Sigmoid colon (tissue), 7 donors: ENCODE measurements at regions of chr7 and their contacts with region 1.

Region 1: GRCh38 chr7:140175221-140176121 is 1.3 kb downstream of the KDM7A start:
- DNase-seq: peak; percentile 97
- H3K4me3 ChIP-seq: peak overlapping the region; percentile 75 to 97 (median 81)
- H3K27ac ChIP-seq: peak overlapping the region; percentile 95 to 100 (median 100)
- H3K4me1 ChIP-seq: peaks cover 0 to 29% (median 23%) of the 10 kb centered on the region in 4 donors
- H3K27me3 ChIP-seq: no peaks in the 10 kb centered on the region
- CTCF ChIP-seq: peak; percentile 76 to 95 (median 84)
- EP300 ChIP-seq: peak in 1 of 4 donors; percentile 14
- POLR2A ChIP-seq: peak; percentile 63 to 76

Region 2: GRCh38 chr7:139359366-139360209 is 815.9 kb before region 1 on chr7 and contains the start of gene LUC7L2:
- intact Hi-C with region 1: loop called (anchors 5 kb)
- DNase-seq: peak; percentile 100
- H3K4me3 ChIP-seq: peak within 1 kb of the TSS; percentile 76 to 98 (median 94)
- H3K27ac ChIP-seq: peak within 1 kb of the TSS; percentile 98 to 100 (median 100)
- H3K4me1 ChIP-seq: peaks cover 0 to 41% (median 32%) of the 10 kb centered on the region in 4 donors
- H3K27me3 ChIP-seq: no peaks in the 10 kb centered on the region
- CTCF ChIP-seq: no peak
- EP300 ChIP-seq: peak in 2 of 4 donors; percentile 20 to 59
- POLR2A ChIP-seq: peak; percentile 82 to 93
- total RNA-seq, gene LUC7L2: 67.1 to 79.1 (median 74.5) TPM

Region 3: GRCh38 chr7:140062528-140063299 is 112.8 kb before region 1 on chr7 and contains the start of gene PARP12:
- intact Hi-C with region 1: loop called (anchors 5 kb)
- DNase-seq: peak; percentile 90
- H3K4me3 ChIP-seq: peak within 1 kb of the TSS; percentile 70 to 82 (median 72)
- H3K27ac ChIP-seq: peak within 1 kb of the TSS; percentile 88 to 91 (median 90)
- H3K4me1 ChIP-seq: peaks cover 0 to 36% (median 22%) of the 10 kb centered on the region in 4 donors
- H3K27me3 ChIP-seq: no peaks in the 10 kb centered on the region
- CTCF ChIP-seq: no peak
- EP300 ChIP-seq: no peak
- POLR2A ChIP-seq: peak in 1 of 2 donors; percentile 23
- total RNA-seq, gene PARP12: 20.6 to 29.9 (median 22.9) TPM

Region 4: DNA sequence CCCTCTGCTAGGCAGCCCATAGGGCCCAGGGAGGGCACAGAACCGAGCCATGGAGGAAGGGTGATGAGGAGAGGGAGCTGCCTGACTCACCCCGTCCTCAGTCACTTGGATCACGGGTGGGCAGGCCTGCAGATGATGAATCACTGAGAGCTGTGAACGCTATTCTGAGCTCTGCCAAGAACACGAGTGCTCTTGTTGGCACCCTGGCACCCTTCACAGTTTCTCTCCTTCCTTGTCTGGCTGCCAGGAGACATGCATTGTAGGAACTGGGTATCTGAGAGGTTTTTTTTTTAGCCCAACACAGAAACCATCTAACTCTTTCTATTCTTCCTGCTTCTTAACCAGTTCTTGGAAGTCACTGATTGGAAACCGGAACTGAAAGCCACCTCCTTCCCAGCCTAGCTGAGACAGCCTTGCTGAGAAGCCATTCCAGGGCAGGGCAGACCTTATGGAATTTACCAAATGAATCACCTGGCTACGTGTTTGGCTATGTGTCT is 140.7 kb after region 1 on chr7:
- intact Hi-C with region 1: loop called (anchors 2 kb)
- DNase-seq: peak; percentile 94
- H3K4me3 ChIP-seq: peak overlapping the region in 3 of 4 donors; percentile 19 to 26 (median 21)
- H3K27ac ChIP-seq: peak overlapping the region; percentile 82 to 84 (median 82)
- H3K4me1 ChIP-seq: peaks cover 0 to 28% (median 26%) of the 10 kb centered on the region in 4 donors
- H3K27me3 ChIP-seq: no peaks in the 10 kb centered on the region
- CTCF ChIP-seq: no peak
- EP300 ChIP-seq: peak in 1 of 4 donors; percentile 65
- POLR2A ChIP-seq: no peak

Region 5: DNA sequence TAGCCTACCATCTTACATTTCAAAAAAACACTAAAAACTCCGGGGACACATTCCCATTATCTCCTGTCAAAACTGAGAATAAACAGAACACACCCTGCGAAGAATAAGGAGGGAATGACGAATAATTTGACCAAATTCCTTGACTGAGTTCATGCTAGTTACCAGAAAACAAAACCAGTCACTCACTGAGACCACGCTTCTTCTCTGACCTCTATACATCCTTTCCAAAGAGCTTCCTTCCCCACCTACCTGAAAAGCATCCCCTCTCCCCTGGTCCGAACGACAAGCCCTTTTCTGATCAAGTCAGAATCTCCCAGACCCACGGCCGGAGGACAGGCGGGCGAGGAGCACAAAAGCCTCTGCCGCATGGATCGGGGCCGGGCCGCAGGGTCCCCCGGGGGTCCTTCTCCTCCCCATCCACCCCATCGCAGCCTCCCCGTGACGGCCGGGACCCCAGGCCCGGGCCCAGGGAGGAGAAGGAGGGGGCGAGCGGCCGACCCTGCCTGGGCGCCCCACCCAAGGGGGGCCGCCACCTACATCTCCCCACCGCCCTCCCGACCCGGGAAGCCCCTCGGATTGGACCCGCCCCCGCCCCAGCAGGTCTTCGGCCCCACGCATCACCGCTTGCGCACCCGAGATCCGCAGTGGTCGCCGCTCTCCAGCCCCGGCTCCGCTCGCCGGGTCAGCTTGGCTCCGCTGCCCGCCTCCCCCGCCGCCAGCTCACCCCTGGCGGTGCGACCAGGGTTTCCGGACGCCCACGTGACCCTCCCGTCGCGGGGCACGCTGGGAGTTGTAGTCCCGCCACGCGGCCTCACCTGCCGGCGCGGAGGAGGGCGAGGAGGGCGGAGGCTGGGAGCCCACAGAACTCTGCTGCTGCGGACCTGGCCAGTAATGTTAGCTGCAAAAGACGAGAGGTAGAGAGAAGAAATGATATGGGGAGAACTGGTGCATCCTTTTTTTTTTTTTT is 222.6 kb after region 1 on chr7 and contains the start of gene SLC37A3:
- intact Hi-C with region 1: loop called (anchors 2 kb)
- DNase-seq: peak; percentile 93
- H3K4me3 ChIP-seq: peak within 1 kb of the TSS; percentile 85 to 100 (median 99)
- H3K27ac ChIP-seq: peak within 1 kb of the TSS; percentile 89 to 97 (median 92)
- H3K4me1 ChIP-seq: peaks cover 0 to 16% (median 11%) of the 10 kb centered on the region in 4 donors
- H3K27me3 ChIP-seq: peaks cover 0 to 17% (median 0%) of the 10 kb centered on the region in 3 donors
- CTCF ChIP-seq: peak in 1 of 4 experiments; percentile 28
- EP300 ChIP-seq: no peak
- POLR2A ChIP-seq: peak; percentile 55
- total RNA-seq, gene SLC37A3: 54.6 to 109 (median 67.0) TPM

Region 6: GRCh38 chr7:140673063-140673773 is 497.7 kb after region 1 on chr7:
- intact Hi-C with region 1: loop called (anchors 10 kb)
- DNase-seq: peak; percentile 70
- H3K4me3 ChIP-seq: peak overlapping the region; percentile 53 to 79 (median 74)
- H3K27ac ChIP-seq: peak overlapping the region; percentile 79 to 87 (median 82)
- H3K4me1 ChIP-seq: peaks cover 0 to 35% (median 29%) of the 10 kb centered on the region in 4 donors
- H3K27me3 ChIP-seq: no peaks in the 10 kb centered on the region
- CTCF ChIP-seq: no peak
- EP300 ChIP-seq: no peak
- POLR2A ChIP-seq: peak in 1 of 2 donors; percentile 35